ENCODE measurements at regions of chr9 and their contacts with region 1.

Region 1: DNA sequence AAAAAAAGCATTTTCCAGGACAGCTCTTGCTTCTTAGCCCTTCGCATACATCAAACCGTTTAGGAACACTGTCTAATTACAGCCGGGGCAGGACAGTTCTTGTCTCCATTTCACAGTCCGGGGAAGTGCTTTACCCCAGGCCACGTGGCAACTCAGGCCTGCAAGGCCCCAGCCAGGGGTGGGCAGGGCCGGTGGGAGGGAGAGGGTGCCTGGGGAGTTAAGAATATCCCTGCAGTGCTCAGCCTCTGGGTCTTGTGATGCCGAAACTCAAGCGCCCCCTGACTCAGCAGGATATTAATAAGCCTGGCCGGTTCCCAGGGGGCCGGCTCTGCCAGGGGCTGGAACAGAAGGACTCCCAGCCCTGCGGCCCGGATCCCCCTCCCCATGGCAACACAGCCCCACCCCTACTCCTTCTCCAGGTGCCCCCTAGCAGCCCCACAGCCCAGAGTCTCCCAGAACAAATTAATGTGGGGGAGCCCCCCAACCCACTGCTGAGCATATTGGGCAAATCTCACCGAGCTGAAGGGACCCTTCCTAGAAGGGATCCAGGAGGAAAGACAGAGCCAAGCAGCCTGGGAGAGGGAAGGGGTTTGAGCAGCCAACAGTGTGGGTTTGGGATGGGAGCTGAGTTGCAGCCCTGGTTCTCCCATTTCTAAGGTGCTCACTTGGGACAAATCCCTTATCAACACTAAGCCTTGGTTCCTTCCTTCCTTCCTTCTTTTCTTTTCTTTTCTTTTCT is 45.3 kb downstream of the PLPP7 start:
- DNase-seq: peak; percentile 45
- H3K4me3 ChIP-seq: no peak overlapping the region
- H3K27ac ChIP-seq: no peak overlapping the region
- H3K4me1 ChIP-seq: peaks cover 0 to 7% (median 4%) of the 10 kb centered on the region in 6 donors
- H3K27me3 ChIP-seq: no peaks in the 10 kb centered on the region
- CTCF ChIP-seq: no peak
- POLR2A ChIP-seq: no peak

Region 2: GRCh38 chr9:131068076-131068816 is 266.6 kb before region 1 on chr9:
- intact Hi-C with region 1: loop called (anchors 10 kb)
- DNase-seq: no peak
- H3K4me3 ChIP-seq: no peak overlapping the region
- H3K27ac ChIP-seq: no peak overlapping the region
- H3K4me1 ChIP-seq: no peaks in the 10 kb centered on the region
- H3K27me3 ChIP-seq: no peaks in the 10 kb centered on the region
- CTCF ChIP-seq: no peak
- POLR2A ChIP-seq: no peak

Region 3: DNA sequence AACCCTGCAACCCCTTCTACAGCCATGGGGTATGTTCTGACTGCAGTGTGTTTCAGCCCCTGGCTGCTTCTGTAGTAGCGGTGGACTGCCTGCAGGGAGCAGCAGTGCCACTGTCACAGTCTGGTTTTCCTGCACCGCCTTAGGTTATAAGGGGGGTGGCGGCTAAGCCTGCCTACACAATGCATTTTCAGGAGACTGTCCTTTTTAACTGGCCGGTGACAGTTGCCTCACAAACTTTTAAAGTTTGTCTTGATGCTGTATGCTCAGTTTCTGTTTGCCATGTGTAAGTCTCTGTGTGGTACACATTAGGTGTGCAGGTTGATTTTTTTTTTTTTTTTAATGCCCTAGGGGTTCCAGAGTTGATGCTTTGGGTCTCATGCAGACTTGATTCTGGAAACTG is 156.4 kb before region 1 on chr9:
- intact Hi-C with region 1: loop called (anchors 2 kb)
- DNase-seq: peak; percentile 91
- H3K4me3 ChIP-seq: no peak overlapping the region
- H3K27ac ChIP-seq: no peak overlapping the region
- H3K4me1 ChIP-seq: peaks cover 0 to 39% (median 23%) of the 10 kb centered on the region in 6 donors
- H3K27me3 ChIP-seq: no peaks in the 10 kb centered on the region
- CTCF ChIP-seq: peak; percentile 86 to 97 (median 95)
- POLR2A ChIP-seq: no peak

Region 4: GRCh38 chr9:131277910-131278701 is 56.7 kb before region 1 on chr9:
- intact Hi-C with region 1: no loop called
- DNase-seq: peak; percentile 93
- H3K4me3 ChIP-seq: peak overlapping the region; percentile 78 to 96 (median 88)
- H3K27ac ChIP-seq: peak overlapping the region; percentile 74 to 97 (median 90)
- H3K4me1 ChIP-seq: peaks cover 7 to 81% (median 47%) of the 10 kb centered on the region in 6 donors
- H3K27me3 ChIP-seq: peaks cover 0 to 35% (median 21%) of the 10 kb centered on the region in 7 donors
- CTCF ChIP-seq: no peak
- POLR2A ChIP-seq: no peak

Measured in spleen (tissue), 13 donors.